Vagina (tissue), 2 donors: ENCODE measurements at regions of chr14 and their contacts with region 1.

Region 1: GRCh38 chr14:22986508-22987054 is 4.2 kb upstream of the AJUBA start:
- DNase-seq: no peak
- H3K4me3 ChIP-seq: no peak overlapping the region
- H3K27ac ChIP-seq: no peak overlapping the region
- H3K4me1 ChIP-seq: no peaks in the 10 kb centered on the region
- H3K27me3 ChIP-seq: no peaks in the 10 kb centered on the region
- CTCF ChIP-seq: peak; percentile 86 to 92 (median 91)
- POLR2A ChIP-seq: no peak

Region 2: DNA sequence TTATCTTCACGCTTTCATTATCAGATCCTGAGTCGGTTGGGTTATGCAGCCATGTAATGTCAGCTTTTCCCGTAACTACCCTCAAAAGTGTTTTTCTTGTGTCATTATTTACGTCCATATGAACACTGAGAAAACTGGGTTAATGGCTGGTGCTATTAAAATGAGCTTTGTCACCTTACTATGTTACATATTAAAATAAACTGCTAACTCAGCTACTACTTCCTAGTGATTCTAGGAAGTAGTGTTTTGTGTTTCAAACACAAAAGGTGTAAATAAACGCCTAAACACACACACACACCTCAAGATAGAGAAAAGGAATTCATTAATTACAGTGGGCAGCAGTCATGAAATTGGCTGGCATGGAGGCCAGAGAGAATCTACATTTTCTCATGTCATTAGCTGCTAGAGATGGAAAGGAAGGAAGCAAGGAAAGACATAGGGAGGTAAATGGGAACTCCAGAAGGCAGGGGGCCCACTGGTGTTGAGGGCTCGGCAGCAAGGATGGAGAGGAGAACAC is 56.7 kb before region 1 on chr14:
- intact Hi-C with region 1: loop called (anchors 5 kb)
- DNase-seq: no peak
- H3K4me3 ChIP-seq: peak overlapping the region; percentile 17 to 92
- H3K27ac ChIP-seq: peak overlapping the region; percentile 91
- H3K4me1 ChIP-seq: peaks cover 30% of the 10 kb centered on the region
- H3K27me3 ChIP-seq: no peaks in the 10 kb centered on the region
- CTCF ChIP-seq: no peak
- POLR2A ChIP-seq: no peak

Region 3: GRCh38 chr14:23047034-23047634 is 60.6 kb after region 1 on chr14:
- intact Hi-C with region 1: no loop called
- DNase-seq: no peak
- H3K4me3 ChIP-seq: no peak overlapping the region
- H3K27ac ChIP-seq: no peak overlapping the region
- H3K4me1 ChIP-seq: no peaks in the 10 kb centered on the region
- H3K27me3 ChIP-seq: no peaks in the 10 kb centered on the region
- CTCF ChIP-seq: no peak
- POLR2A ChIP-seq: no peak

Region 4: DNA sequence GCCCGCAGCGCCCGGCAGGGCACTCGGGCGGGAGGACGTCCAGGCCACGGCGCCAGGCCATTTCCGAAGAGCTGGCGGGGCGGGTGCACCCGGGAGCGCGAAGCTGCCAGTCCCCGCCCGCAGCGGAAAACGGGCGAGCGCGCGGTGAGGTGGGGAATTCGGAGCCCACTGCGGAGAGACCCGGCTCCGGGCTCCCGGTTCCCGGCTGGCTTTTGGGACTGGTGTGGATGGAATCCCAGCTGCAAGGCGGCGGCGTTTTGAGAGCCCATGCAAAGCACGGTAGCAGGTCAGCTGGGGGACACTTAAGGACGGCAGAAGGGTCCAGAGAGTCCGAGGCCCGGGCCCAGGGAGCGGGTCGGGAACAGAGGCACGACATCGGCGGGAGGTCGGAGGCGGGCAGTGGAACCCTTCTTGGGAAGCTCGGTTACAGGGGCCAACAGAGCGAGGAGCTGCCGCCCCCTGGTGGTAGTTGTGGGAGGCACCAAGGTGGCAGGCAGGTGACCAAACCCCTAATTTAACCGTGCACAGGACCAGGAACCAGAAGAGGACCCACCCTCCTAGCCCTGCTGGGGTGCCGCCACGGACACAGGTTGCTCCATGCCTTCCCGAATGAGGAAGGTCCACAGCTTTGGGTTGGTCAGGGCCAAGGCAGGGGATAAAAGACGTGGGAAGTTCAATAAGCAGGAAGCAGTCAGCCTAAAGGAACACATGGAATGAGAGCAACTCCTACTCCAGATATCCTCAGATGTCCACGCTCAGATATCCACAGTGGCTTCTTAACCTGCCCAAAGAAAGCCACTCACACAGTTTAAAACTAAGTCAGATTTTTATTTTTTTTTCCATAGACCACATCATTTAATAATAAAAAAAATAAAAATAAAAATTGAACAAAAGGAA is 71.4 kb after region 1 on chr14:
- intact Hi-C with region 1: loop called (anchors 1 kb)
- DNase-seq: no peak
- H3K4me3 ChIP-seq: peak overlapping the region; percentile 45 to 82
- H3K27ac ChIP-seq: peak overlapping the region; percentile 96
- H3K4me1 ChIP-seq: peaks cover 33% of the 10 kb centered on the region
- H3K27me3 ChIP-seq: no peaks in the 10 kb centered on the region
- CTCF ChIP-seq: peak; percentile 92 to 95 (median 94)
- POLR2A ChIP-seq: no peak